ENCODE measurements at regions of chr19 and their contacts with region 1.

Region 1: DNA sequence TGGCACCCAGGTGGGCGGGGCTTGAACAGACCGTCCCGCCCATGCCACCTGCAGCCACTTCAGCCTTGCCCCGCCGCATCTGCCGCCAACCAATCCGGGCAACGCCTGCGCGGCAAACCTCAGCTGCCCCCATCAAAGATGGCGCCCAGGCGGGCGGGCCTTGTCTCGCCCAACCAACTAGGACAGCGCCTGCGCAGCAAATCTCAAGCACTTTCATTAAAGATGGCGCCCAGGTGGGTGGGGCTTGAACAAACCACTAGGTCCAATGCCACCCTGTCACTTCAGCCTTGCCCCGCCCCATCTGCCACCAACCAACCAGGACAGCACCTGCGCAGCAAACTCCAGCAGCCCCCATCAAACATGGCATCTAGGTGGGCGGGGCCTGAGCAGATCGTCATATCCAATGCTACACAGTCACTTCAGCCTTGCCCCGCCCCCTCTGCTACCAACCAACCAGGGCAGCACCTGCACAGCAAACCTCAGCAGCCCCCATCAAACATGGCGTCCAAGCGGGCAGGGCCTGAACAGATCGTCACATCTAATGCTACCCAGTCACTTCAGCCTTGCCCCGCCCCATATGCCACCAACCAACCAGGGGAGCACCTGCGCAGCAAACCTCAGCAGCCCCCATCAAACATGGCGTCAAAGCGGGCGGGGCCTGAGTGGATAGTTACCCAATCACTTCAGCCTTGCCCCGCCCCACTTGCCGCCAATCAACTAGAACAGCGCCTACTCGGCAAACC is 1.4 kb downstream of the PEG3 start:
- DNase-seq: peak; percentile 92 to 99 (median 96)

Region 2: DNA sequence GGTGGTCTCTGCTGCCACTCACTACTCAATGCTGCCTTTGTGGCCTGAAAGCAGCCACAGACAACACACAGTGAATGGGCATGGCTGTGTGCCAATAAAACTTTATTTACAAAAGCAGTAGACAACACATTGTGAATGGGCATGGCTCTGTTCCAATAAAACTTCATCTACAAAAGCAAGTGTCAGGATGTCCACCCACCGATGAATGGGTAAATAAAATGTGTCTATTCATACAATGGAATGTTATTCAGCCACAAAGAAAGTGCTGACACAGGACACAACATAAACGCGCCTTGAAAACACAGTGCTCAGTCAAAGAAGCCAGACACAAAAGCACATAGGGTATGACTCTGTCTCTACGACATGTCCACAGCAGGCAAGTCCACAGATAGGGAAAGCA is 544.5 kb before region 1 on chr19:
- intact Hi-C with region 1: no loop called
- DNase-seq: no peak

Region 3: DNA sequence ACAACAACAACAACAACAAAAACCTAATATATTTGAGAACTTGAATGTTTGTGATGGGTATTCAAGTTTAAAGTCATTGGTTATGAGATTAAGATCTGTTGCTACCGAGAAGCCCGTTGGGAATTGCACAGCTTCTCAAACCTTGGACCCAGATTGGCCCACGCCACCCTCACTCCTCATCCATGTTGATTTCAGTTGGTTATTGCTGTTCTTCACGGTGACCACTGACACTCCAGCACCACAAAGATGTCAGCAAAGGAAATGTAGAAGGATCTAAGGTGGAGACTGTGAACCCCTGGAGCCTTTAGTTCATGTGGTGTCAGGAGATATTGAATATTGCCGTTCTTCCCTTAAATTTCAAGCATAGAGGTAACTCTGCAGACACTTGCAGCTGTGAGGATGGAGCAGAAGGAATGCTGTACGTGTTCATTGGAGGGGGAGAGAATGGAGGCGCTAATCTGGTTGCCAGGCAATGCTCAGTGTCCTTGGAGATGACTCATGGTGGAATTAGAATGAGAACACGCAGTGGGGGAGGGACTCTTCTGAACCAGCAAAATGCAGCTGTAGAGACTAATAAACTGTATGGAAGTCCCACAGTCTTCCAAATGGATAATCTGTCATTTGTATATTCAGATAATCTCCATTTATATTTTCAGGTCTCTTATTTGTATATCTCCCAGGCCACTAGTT is 146.7 kb before region 1 on chr19:
- intact Hi-C with region 1: loop called (anchors 5 kb)
- DNase-seq: peak in 8 of 10 donors; percentile 41 to 94 (median 67)

Region 4: DNA sequence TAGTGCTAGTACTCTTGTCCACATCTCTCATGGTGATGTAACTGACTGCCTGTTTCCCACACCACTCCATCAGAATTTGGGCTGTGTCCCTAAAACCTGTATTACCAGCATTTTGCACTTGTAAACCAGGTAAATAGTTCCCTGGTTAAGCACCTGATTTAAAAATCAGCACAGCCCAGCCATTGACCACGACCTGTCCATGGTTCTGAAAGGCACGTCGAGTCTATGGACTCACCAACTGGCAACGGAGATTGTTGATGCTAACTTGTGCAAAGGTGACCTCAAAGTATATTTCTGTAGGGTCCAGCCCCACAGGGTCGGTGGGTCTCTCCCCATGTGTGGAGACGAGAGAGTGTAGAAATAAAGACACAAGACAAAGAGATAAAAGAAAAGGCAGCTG is 120.8 kb before region 1 on chr19:
- intact Hi-C with region 1: loop called (anchors 2 kb)
- DNase-seq: no peak

Region 5: DNA sequence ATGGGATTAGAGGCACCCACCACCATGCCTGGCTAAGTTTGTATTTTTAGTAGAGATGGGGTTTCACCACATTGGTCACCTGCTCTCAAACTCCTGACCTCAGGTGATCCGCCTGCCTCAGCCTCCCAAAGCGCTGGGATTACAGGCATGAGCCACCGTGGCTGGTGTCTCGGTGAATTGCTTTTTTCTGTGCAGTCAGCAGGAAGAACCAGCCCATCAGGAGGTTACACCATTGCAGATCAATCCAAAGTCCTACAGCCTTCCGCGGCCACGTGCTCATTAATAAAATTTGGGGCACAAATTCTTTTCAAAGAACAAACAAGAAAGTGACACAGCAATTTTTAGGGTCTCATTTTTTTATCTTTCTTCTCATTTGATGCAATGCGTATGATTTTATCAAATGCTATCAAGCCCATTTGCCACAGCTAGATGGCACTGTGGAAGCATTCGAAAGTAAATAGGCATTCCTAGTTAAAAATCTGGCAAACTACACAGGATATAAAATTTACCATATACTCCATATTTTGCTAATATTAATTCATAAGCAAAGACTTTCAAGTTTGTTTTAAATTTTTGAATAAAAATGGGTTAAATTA is 113.2 kb before region 1 on chr19:
- intact Hi-C with region 1: loop called (anchors 2 kb)
- DNase-seq: peak in 2 of 10 donors; percentile 44 to 50

Region 6: GRCh38 chr19:56748378-56748777 is 90.7 kb before region 1 on chr19:
- intact Hi-C with region 1: loop called (anchors 1 kb)
- DNase-seq: peak in 1 of 10 donors; percentile 27

Region 7: GRCh38 chr19:56864443-56865125 is 25.5 kb after region 1 on chr19:
- intact Hi-C with region 1: no loop called
- DNase-seq: no peak

Region 8: GRCh38 chr19:57099199-57099661 is 260.1 kb after region 1 on chr19:
- intact Hi-C with region 1: loop called (anchors 2 kb)
- DNase-seq: peak; percentile 68 to 97 (median 80)

Measured in posterior cingulate gyrus (tissue), 11 donors.